ENCODE measurements at regions of chr5 and their contacts with region 1.

Region 1: GRCh38 chr5:14351845-14352712 is 208.9 kb downstream of the TRIO start:
- DNase-seq: peak; percentile 51 to 66
- H3K4me3 ChIP-seq: no peak overlapping the region
- H3K4me3 Mint-ChIP-seq: no peak overlapping the region
- H3K27ac Mint-ChIP-seq: no peak overlapping the region
- H3K4me1 ChIP-seq: no peaks in the 10 kb centered on the region
- H3K4me1 Mint-ChIP-seq: no peaks in the 10 kb centered on the region
- H3K27me3 ChIP-seq: no peaks in the 10 kb centered on the region
- H3K27me3 Mint-ChIP-seq: no peaks in the 10 kb centered on the region
- CTCF ChIP-seq: peak; percentile 91 to 97

Region 2: DNA sequence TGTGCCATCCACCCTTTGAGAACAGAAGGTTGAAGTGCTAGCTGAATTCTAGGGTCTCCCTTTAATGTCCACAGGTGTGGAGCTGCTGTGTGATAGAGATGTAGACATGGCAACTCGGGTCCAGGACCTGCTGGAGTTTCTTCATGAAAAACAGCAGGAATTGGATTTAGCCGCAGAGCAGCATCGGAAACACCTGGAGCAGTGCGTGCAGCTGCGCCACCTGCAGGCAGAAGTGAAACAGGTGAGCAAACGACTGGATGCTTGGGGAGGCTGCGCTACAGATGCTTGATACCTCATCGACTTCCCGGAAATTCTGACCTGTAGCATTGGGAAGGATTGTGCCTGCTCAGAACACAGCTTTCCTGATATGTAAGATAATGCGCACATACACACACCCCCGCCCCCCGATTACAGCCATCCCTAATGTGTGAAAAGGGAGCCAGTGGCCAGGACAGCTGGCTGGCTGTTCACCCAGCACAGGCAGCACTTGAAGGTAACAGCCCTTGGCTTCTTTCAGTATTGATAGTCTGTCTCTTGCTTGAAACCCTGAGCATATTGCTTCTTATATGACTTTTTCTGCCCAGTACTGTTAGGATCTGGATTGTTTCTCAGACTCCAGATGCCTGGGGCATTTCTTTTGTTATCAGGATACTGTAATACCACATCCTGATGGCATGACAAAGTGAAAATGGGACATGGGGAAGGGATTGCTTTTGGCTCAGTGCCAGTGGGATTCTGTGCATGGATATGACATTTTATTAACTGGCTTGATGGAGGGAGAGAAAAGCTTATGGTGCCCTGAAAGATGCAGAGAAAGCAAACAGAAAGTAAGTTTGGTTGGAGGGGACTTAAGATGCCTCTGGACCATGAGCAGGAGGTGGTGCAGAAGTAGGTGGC is 12.7 kb after region 1 on chr5:
- CTCF ChIA-PET with region 1: interaction called, 4 read pairs
- POLR2A ChIA-PET with region 1: no interaction called
- intact Hi-C with region 1: loop called (anchors 1 kb)
- DNase-seq: peak; percentile 60 to 63
- H3K4me3 ChIP-seq: no peak overlapping the region
- H3K4me3 Mint-ChIP-seq: no peak overlapping the region
- H3K27ac Mint-ChIP-seq: no peak overlapping the region
- H3K4me1 ChIP-seq: no peaks in the 10 kb centered on the region
- H3K4me1 Mint-ChIP-seq: no peaks in the 10 kb centered on the region
- H3K27me3 ChIP-seq: no peaks in the 10 kb centered on the region
- H3K27me3 Mint-ChIP-seq: no peaks in the 10 kb centered on the region
- CTCF ChIP-seq: peak; percentile 72 to 90

Region 3: DNA sequence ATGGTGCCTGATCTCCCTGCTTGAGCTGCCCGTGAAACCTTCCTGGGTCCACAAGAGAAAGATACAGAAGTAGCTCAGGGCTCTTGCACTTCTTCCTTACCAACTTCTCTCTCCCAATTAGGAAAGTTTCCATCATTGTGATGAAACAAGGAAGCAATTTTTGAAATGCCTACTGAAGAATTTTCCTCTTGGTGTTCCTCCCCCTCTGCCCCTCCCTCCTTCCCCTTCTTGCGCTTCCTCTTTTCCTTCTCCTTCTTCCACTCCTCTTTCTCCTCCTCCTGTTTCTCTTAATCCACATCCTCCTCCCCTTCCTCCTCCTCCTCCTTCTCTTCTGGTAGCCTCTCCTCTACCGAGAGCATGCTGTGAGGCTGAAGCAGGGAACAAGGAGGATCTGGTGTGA is 193.2 kb after region 1 on chr5:
- CTCF ChIA-PET with region 1: no interaction called
- POLR2A ChIA-PET with region 1: interaction called, 12 read pairs
- intact Hi-C with region 1: no loop called
- DNase-seq: peak in 1 of 2 experiments; percentile 6
- H3K4me3 ChIP-seq: no peak overlapping the region
- H3K4me3 Mint-ChIP-seq: no peak overlapping the region
- H3K27ac Mint-ChIP-seq: no peak overlapping the region
- H3K4me1 ChIP-seq: peaks cover 2% of the 10 kb centered on the region
- H3K4me1 Mint-ChIP-seq: peaks cover 5% of the 10 kb centered on the region
- H3K27me3 ChIP-seq: no peaks in the 10 kb centered on the region
- H3K27me3 Mint-ChIP-seq: no peaks in the 10 kb centered on the region
- CTCF ChIP-seq: no peak

Measured in Caco-2 (cell line).